ENCODE measurements at regions of chr19 and their contacts with region 1.

Region 1: GRCh38 chr19:52007806-52008557 is at the start of gene ZNF615:
- DNase-seq: peak; percentile 91 to 92
- ATAC-seq: peak; percentile 95 to 96 (median 95)
- H3K4me3 ChIP-seq: peak within 1 kb of the TSS; percentile 92
- H3K4me3 Mint-ChIP-seq: peak within 1 kb of the TSS; percentile 100
- H3K27ac ChIP-seq: peak within 1 kb of the TSS; percentile 96
- H3K27ac Mint-ChIP-seq: peak within 1 kb of the TSS; percentile 97 to 100
- H3K4me1 ChIP-seq: peaks cover 10% of the 10 kb centered on the region
- H3K4me1 Mint-ChIP-seq: peaks cover 16 to 17% of the 10 kb centered on the region in 2 donors
- H3K27me3 ChIP-seq: no peaks in the 10 kb centered on the region
- H3K27me3 Mint-ChIP-seq: no peaks in the 10 kb centered on the region
- CTCF ChIP-seq: no peak
- total RNA-seq, gene ZNF615: 15.4 to 26.3 (median 19.9) TPM

Region 2: GRCh38 chr19:51904331-51905165 is 103.4 kb before region 1 on chr19 and contains the start of gene ZNF649:
- intact Hi-C with region 1: loop called (anchors 5 kb)
- DNase-seq: peak; percentile 76 to 88
- ATAC-seq: peak; percentile 92 to 96 (median 94)
- H3K4me3 ChIP-seq: peak within 1 kb of the TSS; percentile 68
- H3K4me3 Mint-ChIP-seq: peak within 1 kb of the TSS; percentile 100
- H3K27ac ChIP-seq: peak within 1 kb of the TSS; percentile 76
- H3K27ac Mint-ChIP-seq: peak within 1 kb of the TSS; percentile 96 to 97
- H3K4me1 ChIP-seq: peaks cover 15% of the 10 kb centered on the region
- H3K4me1 Mint-ChIP-seq: peaks cover 34 to 35% of the 10 kb centered on the region in 2 donors
- H3K27me3 ChIP-seq: peaks cover 4% of the 10 kb centered on the region
- H3K27me3 Mint-ChIP-seq: peaks cover 13 to 18% of the 10 kb centered on the region in 2 donors
- CTCF ChIP-seq: no peak
- total RNA-seq, gene ZNF649: 11.0 to 16.1 (median 12.3) TPM

Region 3: DNA sequence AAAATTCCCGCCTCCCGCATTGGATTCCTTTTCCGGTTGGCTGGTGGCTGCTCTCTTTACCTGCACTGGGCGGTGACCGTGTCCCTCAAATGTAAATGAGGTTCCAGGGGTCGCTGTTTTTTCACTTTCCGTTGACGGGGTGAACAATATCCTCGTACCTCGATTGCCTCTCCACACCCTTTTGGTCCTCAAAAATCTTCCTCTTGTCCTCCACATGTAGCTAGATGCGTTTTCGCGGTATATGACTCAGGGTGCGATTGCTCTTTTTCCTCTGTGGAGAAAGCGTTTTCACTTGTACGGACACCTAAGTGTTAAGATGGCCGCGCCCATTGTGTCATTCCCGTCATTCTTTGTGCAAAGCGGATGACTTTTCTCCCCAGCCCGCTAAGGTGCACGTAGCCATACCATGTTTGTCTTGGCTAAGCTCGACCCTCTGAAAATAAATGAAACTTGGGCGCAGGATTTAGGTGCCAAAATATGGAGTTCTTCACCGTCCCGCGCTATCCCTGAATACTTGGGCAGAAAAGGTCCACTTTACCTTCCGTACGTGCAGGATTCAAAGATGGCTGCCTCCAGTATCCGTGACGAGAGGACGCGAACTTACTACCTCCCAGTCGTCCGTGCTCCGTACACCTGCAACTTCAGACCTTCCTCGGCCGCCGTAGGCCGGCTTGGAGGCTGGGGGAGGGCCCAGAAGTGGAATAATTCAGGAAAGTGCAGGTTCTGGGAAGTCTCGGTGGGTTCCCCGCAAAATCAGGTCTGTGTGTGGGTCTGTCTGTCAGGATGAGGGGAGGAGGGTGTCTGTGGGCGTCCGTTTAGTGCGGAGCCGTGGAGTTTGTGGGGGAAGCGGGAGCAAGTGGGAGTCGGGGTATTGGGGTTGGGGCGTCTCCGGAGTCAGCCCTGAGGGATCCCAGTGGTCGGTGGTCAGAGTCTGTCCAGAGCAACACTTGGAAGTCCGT is 80.9 kb before region 1 on chr19 and contains the start of gene ZNF613:
- intact Hi-C with region 1: loop called (anchors 5 kb)
- DNase-seq: peak; percentile 76 to 91
- ATAC-seq: peak; percentile 84 to 89 (median 86)
- H3K4me3 ChIP-seq: peak within 1 kb of the TSS; percentile 78
- H3K4me3 Mint-ChIP-seq: peak within 1 kb of the TSS; percentile 96
- H3K27ac ChIP-seq: peak within 1 kb of the TSS; percentile 67
- H3K27ac Mint-ChIP-seq: peak within 1 kb of the TSS; percentile 86 to 98
- H3K4me1 ChIP-seq: peaks cover 16% of the 10 kb centered on the region
- H3K4me1 Mint-ChIP-seq: peaks cover 34 to 36% of the 10 kb centered on the region in 2 donors
- H3K27me3 ChIP-seq: no peaks in the 10 kb centered on the region
- H3K27me3 Mint-ChIP-seq: no peaks in the 10 kb centered on the region
- CTCF ChIP-seq: peak; percentile 24
- total RNA-seq, gene ZNF613: 1.8 to 3.9 (median 2.5) TPM

Region 4: DNA sequence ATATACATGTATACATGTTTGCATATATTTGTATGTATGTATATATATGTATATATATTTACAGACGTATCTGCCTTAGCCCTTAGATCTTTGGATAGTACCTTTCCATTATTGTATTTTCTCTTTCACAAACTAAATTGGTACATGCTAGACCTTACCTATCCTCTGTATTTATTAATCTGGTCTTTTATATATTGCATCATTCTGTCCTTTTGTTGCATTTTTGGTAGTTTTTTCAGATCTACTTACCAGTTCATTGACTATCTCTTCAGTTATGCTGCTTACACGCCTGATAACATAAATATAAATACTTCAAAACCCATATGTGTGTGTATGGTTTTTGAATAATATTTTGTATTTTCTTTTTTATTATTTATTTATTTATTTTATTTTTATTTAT is 69.0 kb before region 1 on chr19:
- intact Hi-C with region 1: no loop called
- DNase-seq: no peak
- ATAC-seq: no peak
- H3K4me3 ChIP-seq: no peak overlapping the region
- H3K4me3 Mint-ChIP-seq: no peak overlapping the region
- H3K27ac ChIP-seq: no peak overlapping the region
- H3K27ac Mint-ChIP-seq: no peak overlapping the region
- H3K4me1 ChIP-seq: no peaks in the 10 kb centered on the region
- H3K4me1 Mint-ChIP-seq: peaks cover 0 to 8% of the 10 kb centered on the region in 2 donors
- H3K27me3 ChIP-seq: no peaks in the 10 kb centered on the region
- H3K27me3 Mint-ChIP-seq: no peaks in the 10 kb centered on the region
- CTCF ChIP-seq: no peak

Region 5: DNA sequence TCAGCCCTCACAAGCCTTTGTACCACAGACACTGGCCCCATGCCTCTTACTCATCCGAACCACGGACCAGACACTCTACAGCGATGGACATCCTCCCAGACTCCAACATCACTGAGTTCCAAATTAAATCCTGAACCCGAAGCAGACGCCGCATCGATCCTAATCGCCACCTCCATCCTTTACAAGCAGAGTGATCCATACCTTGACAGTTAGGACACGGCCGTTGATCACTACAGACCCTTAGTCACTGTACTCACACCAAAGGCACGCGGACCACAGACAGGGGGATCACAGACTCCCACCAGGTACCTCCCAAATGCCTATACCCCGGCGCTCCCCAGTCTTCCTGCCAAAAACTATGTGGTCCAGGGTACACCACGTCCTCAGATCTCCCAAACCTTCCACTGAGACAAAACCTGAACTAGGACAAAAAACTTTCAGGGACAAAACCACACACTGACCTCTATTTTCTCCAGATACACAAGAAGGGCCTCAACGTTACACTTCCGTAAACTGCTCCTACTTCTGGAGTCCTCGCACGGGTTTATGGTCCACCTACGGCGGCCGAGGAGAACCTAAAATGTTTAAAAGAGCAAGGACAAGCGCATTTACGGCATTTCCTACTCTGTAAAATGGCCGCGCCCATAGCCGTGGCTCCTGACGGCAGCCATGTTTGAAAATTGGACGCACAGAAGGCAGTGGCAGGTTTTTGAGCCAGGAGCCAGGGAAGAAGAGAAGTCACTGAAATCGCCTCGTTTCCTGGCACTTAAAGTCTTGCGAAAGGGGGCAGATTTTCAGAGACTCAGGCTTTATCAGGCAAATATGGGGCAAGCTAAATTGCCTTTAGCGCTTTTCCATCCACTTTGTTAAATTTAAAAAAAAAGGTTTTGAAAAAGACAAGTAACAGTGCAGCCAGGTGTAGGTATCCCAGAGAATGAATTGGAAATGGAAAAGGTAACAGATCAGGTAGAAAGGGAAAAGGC is 21.4 kb before region 1 on chr19 and contains the start of gene ZNF350:
- intact Hi-C with region 1: loop called (anchors 1 kb)
- DNase-seq: peak; percentile 86 to 95
- ATAC-seq: peak; percentile 98 to 100 (median 98)
- H3K4me3 ChIP-seq: peak within 1 kb of the TSS; percentile 83
- H3K4me3 Mint-ChIP-seq: peak within 1 kb of the TSS; percentile 96
- H3K27ac ChIP-seq: peak within 1 kb of the TSS; percentile 68
- H3K27ac Mint-ChIP-seq: peak within 1 kb of the TSS; percentile 90 to 96
- H3K4me1 ChIP-seq: peaks cover 15% of the 10 kb centered on the region
- H3K4me1 Mint-ChIP-seq: peaks cover 12 to 13% of the 10 kb centered on the region in 2 donors
- H3K27me3 ChIP-seq: no peaks in the 10 kb centered on the region
- H3K27me3 Mint-ChIP-seq: no peaks in the 10 kb centered on the region
- CTCF ChIP-seq: no peak
- total RNA-seq, gene ZNF350: 32.3 to 46.9 (median 36.6) TPM

Region 6: DNA sequence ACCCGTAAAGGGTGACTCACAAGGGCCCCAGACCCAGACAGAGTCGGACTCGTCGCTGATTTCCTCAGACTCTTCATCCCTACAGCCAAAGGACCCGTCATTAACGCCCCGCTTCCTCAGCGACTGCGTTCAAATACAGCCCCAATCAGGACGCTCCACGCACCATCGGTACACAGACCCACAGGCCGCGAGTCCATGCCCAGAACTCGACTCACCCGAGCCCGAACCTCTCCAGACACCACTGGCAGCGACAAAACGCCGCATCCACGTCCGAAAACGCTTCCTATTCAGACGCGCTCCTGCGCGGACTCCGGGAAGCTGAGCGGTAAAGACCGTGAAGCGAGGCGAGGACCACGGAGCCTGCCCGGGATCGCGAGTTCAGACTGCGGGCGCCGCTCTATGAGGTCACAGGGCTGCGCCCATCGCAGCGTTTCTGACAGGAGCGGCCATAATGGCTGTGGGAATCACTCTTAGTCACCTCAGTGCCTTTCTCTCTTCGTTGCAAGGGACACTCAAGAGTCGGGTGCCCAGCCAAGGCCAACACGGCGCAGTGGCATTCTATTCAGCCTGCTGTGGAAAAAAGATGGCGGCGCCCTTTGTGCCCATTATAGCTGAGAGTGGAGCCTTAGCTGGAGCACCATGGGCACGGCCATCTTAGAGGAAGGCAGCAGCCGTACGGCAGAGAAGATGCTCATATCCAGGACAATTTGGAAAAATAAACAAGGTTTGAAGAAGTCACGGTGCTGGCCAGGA is 20.2 kb after region 1 on chr19 and contains the start of gene ZNF614:
- intact Hi-C with region 1: loop called (anchors 1 kb)
- DNase-seq: peak; percentile 90
- ATAC-seq: peak; percentile 83 to 94 (median 87)
- H3K4me3 ChIP-seq: peak within 1 kb of the TSS; percentile 84
- H3K4me3 Mint-ChIP-seq: peak within 1 kb of the TSS; percentile 89
- H3K27ac ChIP-seq: peak within 1 kb of the TSS; percentile 93
- H3K27ac Mint-ChIP-seq: peak within 1 kb of the TSS; percentile 94 to 99
- H3K4me1 ChIP-seq: peaks cover 7% of the 10 kb centered on the region
- H3K4me1 Mint-ChIP-seq: peaks cover 24 to 30% of the 10 kb centered on the region in 2 donors
- H3K27me3 ChIP-seq: no peaks in the 10 kb centered on the region
- H3K27me3 Mint-ChIP-seq: no peaks in the 10 kb centered on the region
- CTCF ChIP-seq: no peak
- total RNA-seq, gene ZNF614: 4.3 to 9.2 (median 5.7) TPM

Region 7: DNA sequence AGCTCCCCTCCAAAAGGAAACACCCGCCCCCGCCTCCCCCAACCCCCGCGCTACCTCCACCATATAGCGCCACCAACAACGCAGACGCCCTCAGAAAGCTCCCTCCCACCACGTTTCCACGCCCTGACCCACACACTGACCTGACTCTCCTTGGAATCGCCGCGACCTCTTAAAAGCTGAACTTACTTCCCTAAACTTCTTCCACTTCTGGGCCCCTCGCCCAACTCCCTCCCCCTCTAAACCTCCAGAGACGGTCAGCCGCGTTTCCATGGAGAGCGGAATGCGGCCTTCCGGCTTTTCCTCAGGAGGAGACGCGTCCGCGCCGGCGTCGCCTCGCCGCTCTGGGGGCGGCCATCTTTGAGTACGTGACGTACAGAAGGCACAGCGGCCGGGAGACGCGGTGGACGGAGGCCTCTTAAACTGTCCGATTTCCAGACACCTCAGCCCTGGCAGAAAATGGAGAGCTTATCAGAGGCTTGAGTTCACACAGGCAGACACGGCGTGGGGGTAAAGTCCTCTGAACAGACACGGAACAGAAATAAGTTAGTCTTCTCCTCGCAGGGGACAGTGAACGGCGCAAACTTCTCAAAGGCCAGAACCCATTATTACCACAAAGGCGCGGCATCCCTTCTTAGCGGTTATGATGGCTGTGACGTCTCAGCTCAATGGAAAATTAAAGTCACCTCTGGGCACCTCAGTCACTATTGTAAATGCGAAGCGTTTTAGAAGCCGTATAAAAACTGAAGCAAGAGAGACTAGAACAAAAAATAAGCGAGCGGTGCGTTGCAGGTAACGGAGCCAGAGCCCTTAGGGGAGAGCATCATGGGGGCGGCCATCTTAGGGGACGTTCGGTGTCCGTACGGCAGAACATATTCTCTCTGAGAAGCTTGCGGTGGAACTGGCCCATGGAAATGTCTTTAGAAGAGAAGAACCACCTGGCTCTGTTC is 40.8 kb after region 1 on chr19 and contains the start of gene ZNF432:
- intact Hi-C with region 1: loop called (anchors 1 kb)
- DNase-seq: peak; percentile 84 to 90
- ATAC-seq: peak; percentile 84 to 94 (median 88)
- H3K4me3 ChIP-seq: peak within 1 kb of the TSS; percentile 77
- H3K4me3 Mint-ChIP-seq: peak within 1 kb of the TSS; percentile 98
- H3K27ac ChIP-seq: peak within 1 kb of the TSS; percentile 84
- H3K27ac Mint-ChIP-seq: peak within 1 kb of the TSS; percentile 99 to 100
- H3K4me1 ChIP-seq: peaks cover 5% of the 10 kb centered on the region
- H3K4me1 Mint-ChIP-seq: peaks cover 26 to 32% of the 10 kb centered on the region in 2 donors
- H3K27me3 ChIP-seq: no peaks in the 10 kb centered on the region
- H3K27me3 Mint-ChIP-seq: no peaks in the 10 kb centered on the region
- CTCF ChIP-seq: no peak
- total RNA-seq, gene ZNF432: 19.7 to 33.7 (median 32.4) TPM